ENCODE measurements at regions of chr10 and their contacts with region 1.

Region 1: DNA sequence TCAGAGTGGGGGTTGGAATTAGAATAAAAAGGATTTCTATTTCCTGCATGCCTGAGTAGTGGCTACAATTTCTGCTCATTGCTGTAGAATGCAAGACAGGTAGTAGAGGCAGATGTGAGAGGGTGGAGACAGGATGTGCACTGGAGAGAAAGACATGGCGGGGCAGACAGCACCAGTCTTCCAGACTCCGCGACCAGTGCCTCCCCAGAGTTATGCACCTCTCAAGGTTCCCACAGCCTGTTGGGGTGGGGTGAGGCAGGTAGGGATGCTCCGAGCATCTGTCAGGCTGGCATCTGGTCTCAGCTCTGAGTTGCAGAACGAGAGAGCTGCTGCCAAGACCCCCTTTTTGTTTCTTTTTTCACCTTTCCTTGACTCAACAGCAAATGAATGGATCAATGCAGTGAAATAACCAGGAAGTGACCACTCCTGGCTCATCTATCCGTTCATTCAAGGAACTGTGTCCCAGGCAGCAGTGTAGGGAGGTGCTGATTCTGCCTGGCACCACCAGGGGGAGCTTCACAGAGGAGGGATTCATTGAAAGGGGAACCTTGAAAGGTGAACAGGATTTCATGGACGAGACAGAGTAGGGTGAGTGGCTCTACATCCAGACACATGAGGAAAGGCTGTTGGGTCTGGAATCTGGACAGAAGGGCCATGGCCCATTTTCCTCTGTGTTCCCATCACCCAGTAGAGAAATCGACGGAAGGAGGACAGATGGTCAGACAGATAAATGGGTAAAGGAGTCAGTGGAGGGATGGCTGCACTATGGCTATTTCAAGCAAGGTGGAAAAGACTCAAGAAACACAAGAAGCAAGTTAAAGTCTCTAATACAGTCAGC is 17.2 kb upstream of the SLC18A3 start:
- DNase-seq: no peak
- ATAC-seq: peak; percentile 83

Region 2: DNA sequence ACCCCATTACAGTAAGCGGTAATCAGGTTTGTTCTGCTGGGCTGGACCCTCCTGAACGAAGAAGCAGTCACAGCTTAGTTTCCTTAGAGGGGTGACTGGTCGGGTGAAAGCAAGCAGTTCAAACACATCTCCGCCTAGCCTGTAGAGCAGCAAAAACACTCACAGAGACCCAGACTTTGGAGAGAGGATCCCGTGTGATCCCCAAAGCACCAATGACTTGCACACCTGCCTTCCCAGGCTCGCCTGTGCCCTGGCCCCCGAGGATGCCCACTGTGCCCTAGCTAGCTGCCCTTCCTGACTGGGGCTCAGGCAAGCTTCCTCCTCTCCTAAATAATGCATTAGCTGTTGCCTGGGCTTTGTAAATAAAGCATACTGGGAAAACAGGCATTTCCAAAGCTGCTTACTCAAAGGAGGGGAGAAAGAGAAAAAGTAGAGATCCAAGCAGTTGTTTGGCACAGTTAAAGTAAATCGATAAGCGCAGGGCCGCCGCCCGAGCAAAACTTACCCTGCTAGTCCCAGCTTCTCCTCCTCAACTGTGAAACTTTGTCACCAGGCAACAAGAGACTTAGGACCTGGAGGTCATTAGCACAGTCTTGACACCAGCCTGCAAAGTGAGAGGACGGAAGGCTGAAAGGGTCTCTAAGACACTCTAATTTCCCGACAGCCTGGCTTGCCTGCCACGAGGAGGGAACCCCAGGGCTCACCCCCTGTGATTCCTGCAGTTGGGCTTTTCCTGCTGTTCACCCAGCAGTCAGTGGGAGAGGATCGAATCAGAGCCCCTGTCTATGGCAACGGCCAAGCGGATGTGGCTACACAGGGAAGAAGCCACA is 658.1 kb before region 1 on chr10:
- intact Hi-C with region 1: no loop called
- DNase-seq: no peak
- ATAC-seq: no peak

Region 3: GRCh38 chr10:49458869-49459268 is 134.1 kb before region 1 on chr10:
- intact Hi-C with region 1: no loop called
- DNase-seq: no peak
- ATAC-seq: no peak

Region 4: DNA sequence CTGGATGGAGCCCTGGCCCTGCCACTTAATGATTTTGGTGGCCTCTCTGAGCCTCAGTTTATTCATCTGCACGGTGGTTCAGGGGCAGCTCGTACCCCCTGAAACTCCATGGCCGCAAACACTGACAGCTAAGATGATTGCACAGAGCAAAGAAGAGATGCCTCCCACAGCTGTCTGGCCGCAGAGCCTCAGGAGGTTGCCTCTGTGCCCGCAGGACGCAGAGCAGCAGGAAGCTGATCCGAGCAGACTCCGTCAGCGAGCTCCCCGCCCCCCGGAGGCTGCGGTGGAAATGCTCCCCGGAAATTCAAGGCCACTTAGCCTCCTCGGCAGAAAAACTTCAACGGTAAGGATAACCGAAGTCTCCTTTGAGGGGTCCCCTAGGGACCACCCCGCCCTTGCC is 56.3 kb after region 1 on chr10:
- intact Hi-C with region 1: no loop called
- DNase-seq: no peak
- ATAC-seq: no peak

Region 5: DNA sequence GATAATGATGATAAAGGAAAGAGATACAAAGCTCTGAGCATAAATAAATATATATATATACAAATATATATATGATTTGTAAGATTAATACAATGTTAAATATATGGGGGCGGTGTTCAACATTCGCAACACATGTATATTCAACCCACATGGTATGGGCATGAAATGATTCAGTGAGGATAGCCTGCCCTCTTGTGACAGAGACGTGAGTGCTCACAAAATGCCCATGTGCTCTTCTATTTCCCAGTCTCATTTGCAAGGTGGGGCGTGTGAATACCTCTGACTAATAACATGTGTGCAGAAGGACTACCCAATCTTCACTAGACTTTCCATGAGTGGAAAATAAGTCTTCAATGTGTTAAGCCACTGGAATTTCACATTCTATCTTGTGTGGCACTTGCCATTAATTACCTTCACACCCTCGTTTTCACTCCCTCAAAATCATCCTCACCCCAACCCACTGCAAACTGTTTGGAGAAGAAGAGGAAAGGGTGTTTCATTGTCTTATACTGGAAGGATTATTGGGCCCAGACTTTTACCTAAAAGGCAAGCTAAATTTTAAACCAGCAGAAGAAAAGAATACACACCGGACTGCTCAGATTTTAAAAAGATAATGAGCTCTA is 631.5 kb after region 1 on chr10:
- intact Hi-C with region 1: loop called (anchors 5 kb)
- DNase-seq: no peak
- ATAC-seq: peak; percentile 67

Measured in Right ventricle myocardium superior (tissue), 1 donor.